T-cell (primary cell): ENCODE measurements at regions of chr18 and their contacts with region 1.

Region 1: DNA sequence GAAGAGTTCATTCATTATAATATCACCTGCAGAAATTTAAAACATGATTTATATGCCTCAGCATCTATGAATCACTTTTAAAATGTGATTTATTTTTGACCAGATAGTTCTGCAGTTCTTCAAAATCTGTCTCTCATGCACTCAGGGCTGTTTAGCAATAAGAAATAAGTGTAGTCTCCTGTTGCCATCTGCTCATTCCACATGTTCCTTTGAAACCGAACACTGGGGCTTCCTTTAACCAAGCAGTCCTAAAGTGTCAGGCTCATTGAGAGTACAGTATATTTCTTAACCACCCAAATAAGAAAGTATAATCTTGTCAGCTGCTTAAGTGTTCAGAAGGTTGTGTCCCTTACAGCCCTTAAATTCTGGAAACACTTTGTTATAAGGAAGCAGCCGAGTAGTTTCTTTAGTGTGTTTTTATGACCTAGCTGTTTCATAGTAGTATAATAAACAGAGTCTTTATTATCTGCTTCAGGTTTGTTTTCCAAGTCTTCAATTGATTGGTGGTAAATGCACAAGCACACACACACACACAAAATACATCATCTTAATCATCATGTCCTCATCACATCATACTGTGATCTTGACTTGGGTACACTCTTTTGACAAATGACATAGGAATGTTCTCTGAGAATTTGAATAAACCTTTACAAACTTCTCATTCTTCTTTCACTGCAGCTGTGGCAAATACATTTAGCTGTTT is 10.4 kb downstream of the WDR7 start:
- DNase-seq: no peak
- ATAC-seq: no peak
- H3K4me3 ChIP-seq: no peak overlapping the region
- H3K4me3 Mint-ChIP-seq: no peak overlapping the region
- H3K27ac ChIP-seq: no peak overlapping the region
- H3K27ac Mint-ChIP-seq: no peak overlapping the region
- H3K4me1 ChIP-seq: no peaks in the 10 kb centered on the region
- H3K4me1 Mint-ChIP-seq: peaks cover 41 to 65% (median 55%) of the 10 kb centered on the region in 3 donors
- H3K27me3 ChIP-seq: no peaks in the 10 kb centered on the region
- H3K27me3 Mint-ChIP-seq: no peaks in the 10 kb centered on the region

Region 2: GRCh38 chr18:56475250-56475649 is 186.3 kb before region 1 on chr18:
- CTCF ChIA-PET with region 1: no interaction called
- POLR2A ChIA-PET with region 1: no interaction called
- DNase-seq: no peak
- ATAC-seq: no peak
- H3K4me3 ChIP-seq: no peak overlapping the region
- H3K4me3 Mint-ChIP-seq: no peak overlapping the region
- H3K27ac ChIP-seq: no peak overlapping the region
- H3K27ac Mint-ChIP-seq: no peak overlapping the region
- H3K4me1 ChIP-seq: no peaks in the 10 kb centered on the region
- H3K4me1 Mint-ChIP-seq: no peaks in the 10 kb centered on the region
- H3K27me3 ChIP-seq: no peaks in the 10 kb centered on the region
- H3K27me3 Mint-ChIP-seq: peaks cover 0 to 2% of the 10 kb centered on the region in 2 donors

Region 3: GRCh38 chr18:56678836-56679565 is 17.5 kb after region 1 on chr18:
- CTCF ChIA-PET with region 1: interaction called in 1 of 2 experiments, 3 read pairs
- POLR2A ChIA-PET with region 1: interaction called in 1 of 2 experiments, 13 read pairs
- DNase-seq: no peak
- ATAC-seq: no peak
- H3K4me3 ChIP-seq: no peak overlapping the region
- H3K4me3 Mint-ChIP-seq: no peak overlapping the region
- H3K27ac ChIP-seq: no peak overlapping the region
- H3K27ac Mint-ChIP-seq: no peak overlapping the region
- H3K4me1 ChIP-seq: no peaks in the 10 kb centered on the region
- H3K4me1 Mint-ChIP-seq: peaks cover 0 to 2% (median 0%) of the 10 kb centered on the region in 3 donors
- H3K27me3 ChIP-seq: no peaks in the 10 kb centered on the region
- H3K27me3 Mint-ChIP-seq: no peaks in the 10 kb centered on the region